IMR-90 (cell line): ENCODE measurements at regions of chr17 and their contacts with region 1.

Region 1: DNA sequence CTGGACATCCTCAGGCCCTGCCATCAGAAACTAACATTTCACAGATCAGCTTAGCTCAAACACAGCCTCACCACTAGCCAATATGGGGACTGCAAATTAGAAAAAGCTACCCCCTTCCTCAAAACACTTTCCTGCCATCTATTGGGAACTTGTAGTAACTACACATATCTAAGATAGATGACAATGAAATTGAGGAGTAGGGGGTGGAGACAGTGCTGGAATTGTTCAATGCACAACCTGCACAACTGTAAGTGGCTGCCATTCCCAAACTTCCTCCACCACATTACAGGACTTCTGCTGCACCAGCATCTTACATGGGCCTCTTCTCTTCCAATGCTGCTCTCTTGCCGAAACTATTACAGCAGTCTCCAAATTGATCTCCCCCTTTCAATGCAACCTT is 21.9 kb downstream of the AIPL1 start:
- DNase-seq: peak; percentile 40
- ATAC-seq: peak; percentile 96
- H3K4me3 ChIP-seq: no peak overlapping the region
- H3K27ac ChIP-seq: no peak overlapping the region
- H3K4me1 ChIP-seq: no peaks in the 10 kb centered on the region
- H3K27me3 ChIP-seq: peaks cover 14% of the 10 kb centered on the region
- CTCF ChIP-seq: peak; percentile 59
- POLR2A ChIP-seq: no peak
- RAD21 ChIP-seq: peak; percentile 66

Region 2: DNA sequence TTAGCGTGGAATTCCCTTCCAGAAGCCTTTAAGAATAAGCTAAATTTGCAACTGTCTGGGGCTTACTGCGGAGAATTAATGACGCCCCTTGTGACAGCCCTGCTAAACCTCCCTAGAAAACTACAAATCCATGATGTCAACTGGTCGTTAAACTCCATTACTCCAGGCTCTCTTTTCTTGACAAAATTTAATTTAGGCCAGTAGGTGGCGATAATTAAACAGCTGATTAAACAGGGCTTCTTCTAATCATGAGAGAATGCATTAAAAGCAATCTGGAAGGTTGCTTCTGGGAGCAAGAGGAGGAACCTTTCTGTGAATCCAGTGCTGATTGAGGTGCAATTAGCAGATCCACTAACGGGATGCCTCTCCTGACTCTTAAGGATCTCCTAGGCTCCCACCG is 820.7 kb before region 1 on chr17:
- CTCF ChIA-PET with region 1: interaction called, 3 read pairs
- POLR2A ChIA-PET with region 1: no interaction called
- dilution Hi-C with region 1: no loop called
- in situ Hi-C with region 1: no loop called
- intact Hi-C with region 1: loop called (anchors 1 kb)
- DNase-seq: peak; percentile 44
- ATAC-seq: peak; percentile 55; the same call in 1 of the 2 replicates
- H3K4me3 ChIP-seq: no peak overlapping the region
- H3K27ac ChIP-seq: no peak overlapping the region
- H3K4me1 ChIP-seq: no peaks in the 10 kb centered on the region
- H3K27me3 ChIP-seq: peaks cover 17% of the 10 kb centered on the region
- CTCF ChIP-seq: peak; percentile 62
- POLR2A ChIP-seq: no peak
- RAD21 ChIP-seq: peak; percentile 64

Region 3: GRCh38 chr17:5706577-5707216 is 706.4 kb before region 1 on chr17:
- CTCF ChIA-PET with region 1: interaction called, 7 read pairs
- POLR2A ChIA-PET with region 1: no interaction called
- dilution Hi-C with region 1: no loop called
- in situ Hi-C with region 1: loop called (anchors 10 kb)
- intact Hi-C with region 1: loop called (anchors 1 kb)
- DNase-seq: peak; percentile 63
- ATAC-seq: peak; percentile 92
- H3K4me3 ChIP-seq: no peak overlapping the region
- H3K27ac ChIP-seq: no peak overlapping the region
- H3K4me1 ChIP-seq: no peaks in the 10 kb centered on the region
- H3K27me3 ChIP-seq: peaks cover 2% of the 10 kb centered on the region
- CTCF ChIP-seq: peak; percentile 68
- POLR2A ChIP-seq: no peak
- RAD21 ChIP-seq: peak; percentile 65

Region 4: DNA sequence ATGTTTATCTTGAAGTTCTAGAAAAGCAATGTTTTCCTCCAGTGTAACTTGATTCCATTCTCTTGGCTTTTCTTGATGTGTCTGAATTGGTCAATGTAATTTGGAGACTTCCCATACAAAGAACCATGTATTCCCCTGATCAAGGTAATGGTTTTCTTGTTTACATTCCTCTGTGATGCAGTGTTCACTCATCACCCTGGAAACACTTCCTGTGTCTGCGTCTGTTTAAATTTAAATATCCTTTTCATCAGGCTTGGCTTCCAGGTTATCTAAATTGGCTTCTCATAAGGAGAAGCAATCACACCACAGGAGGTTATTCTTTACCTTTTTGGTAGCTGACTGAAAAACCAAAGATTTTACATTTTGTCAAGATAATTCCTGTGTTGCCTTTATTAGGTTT is 580.2 kb before region 1 on chr17:
- CTCF ChIA-PET with region 1: no interaction called
- POLR2A ChIA-PET with region 1: no interaction called
- dilution Hi-C with region 1: no loop called
- in situ Hi-C with region 1: no loop called
- intact Hi-C with region 1: loop called (anchors 10 kb)
- DNase-seq: peak; percentile 83
- ATAC-seq: peak; percentile 76
- H3K4me3 ChIP-seq: no peak overlapping the region
- H3K27ac ChIP-seq: no peak overlapping the region
- H3K4me1 ChIP-seq: peaks cover 3% of the 10 kb centered on the region; the same call in 1 of the 2 replicates
- H3K27me3 ChIP-seq: no peaks in the 10 kb centered on the region
- CTCF ChIP-seq: no peak
- POLR2A ChIP-seq: no peak
- RAD21 ChIP-seq: no peak

Region 5: DNA sequence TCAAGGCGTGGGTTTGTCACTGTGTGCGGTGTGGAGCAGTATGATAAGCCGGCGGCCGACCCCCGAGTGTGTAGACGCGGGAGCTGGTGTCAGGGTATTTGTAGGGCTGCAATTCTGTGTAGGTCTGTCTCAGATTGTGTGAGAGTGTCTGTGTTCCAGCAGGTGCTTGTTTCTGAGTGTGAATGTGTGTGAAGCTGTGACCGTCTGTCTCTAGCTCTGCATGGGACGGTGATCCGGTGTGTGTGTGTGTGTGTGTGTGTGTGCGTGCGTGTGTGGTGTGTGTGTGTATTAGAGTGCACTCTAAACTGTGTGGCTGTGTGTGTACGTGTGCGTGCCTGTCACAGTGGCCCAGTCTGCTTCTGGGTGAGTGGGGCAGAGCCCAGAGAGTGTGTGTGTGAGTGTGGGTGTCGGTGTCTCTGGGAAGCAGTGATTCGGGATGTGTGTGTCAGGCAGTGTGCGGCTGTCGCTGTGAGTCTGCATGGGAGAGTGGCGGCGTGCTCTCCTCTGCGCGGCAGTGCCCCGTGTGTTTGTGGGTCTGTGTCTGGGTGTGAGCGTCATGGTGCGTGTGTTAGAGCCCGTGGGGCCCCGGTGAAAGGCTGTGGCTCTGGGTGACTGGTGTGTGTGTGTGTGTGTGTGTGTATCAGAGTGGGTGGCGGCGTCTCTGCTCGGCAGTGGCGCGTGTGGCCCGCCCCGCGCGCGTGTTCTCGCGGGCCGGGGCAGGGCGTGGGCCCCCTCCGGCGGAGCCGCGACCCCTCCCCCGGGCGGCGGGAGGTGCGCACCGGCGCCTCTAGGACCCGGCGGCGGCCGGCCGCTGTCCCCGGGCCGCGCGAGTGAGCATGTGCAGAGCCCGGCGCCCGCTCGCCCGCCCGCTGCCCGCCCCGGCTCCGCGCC is 343.3 kb before region 1 on chr17 and contains the start of gene WSCD1:
- CTCF ChIA-PET with region 1: no interaction called
- POLR2A ChIA-PET with region 1: no interaction called
- dilution Hi-C with region 1: no loop called
- in situ Hi-C with region 1: no loop called
- intact Hi-C with region 1: loop called (anchors 1 kb)
- DNase-seq: no peak
- ATAC-seq: peak; percentile 72; the same call in 1 of the 2 replicates
- H3K4me3 ChIP-seq: no peak within 1 kb of the TSS; the same call in 1 of the 2 replicates
- H3K27ac ChIP-seq: no peak within 1 kb of the TSS
- H3K4me1 ChIP-seq: no peaks in the 10 kb centered on the region
- H3K27me3 ChIP-seq: peaks cover 22% of the 10 kb centered on the region
- CTCF ChIP-seq: no peak
- POLR2A ChIP-seq: no peak
- RAD21 ChIP-seq: no peak
- total RNA-seq, gene WSCD1: under 0.01 TPM in 1 of 2 replicates, not detected in the other

Region 6: DNA sequence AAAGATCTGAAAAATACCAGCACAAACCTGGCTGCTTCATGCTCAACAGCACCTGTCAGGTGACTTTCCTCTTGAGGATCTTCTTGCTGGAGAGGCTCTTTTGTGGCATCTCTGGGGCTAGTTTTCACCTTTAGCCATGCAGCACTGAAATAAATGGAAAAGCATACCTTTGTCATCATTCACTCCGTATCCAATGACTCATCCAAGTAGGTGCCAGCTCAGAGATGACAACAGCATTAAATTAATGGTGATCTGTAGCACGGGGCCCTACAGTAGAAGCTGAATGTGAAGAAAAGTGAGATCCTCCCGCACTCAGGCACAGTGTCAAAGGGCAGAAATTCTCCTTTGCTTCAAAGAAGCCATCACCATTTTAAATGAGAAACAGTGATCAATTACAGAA is 195.3 kb after region 1 on chr17:
- CTCF ChIA-PET with region 1: no interaction called
- POLR2A ChIA-PET with region 1: no interaction called
- dilution Hi-C with region 1: no loop called
- in situ Hi-C with region 1: no loop called
- intact Hi-C with region 1: no loop called
- DNase-seq: peak; percentile 41
- ATAC-seq: no peak
- H3K4me3 ChIP-seq: no peak overlapping the region
- H3K27ac ChIP-seq: no peak overlapping the region
- H3K4me1 ChIP-seq: no peaks in the 10 kb centered on the region; the same call in none of the 2 replicates
- H3K27me3 ChIP-seq: no peaks in the 10 kb centered on the region
- CTCF ChIP-seq: no peak
- POLR2A ChIP-seq: no peak
- RAD21 ChIP-seq: no peak